ENCODE measurements at regions of chr20 and their contacts with region 1.

Region 1: DNA sequence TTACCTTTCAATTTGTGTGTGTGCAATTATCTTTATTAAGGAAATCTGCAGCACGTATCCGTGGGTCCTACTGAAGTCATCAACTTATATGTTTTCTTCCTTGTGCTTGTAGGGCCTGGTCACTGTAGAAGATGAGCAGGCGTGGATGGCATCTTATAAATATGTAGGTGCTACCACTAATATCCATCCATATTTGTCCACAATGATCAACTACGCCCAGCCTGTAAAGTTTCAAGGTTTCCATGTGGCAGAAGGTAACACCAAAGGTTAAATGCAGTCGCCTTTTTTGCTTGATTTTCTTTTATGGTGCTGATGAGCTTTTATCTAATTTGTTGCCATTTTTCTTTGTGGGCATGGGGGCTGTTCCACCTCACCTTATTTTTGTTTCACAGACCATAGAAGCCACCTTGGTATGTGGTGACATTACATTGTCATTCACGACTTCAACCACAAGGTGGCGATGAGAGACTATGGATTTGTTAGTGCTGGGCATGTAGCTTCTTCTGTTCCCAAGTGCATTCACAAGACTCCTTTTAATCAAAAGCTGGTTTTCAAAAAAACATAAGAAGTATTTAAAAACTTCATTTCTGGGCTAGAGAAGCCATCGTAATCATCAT is 106.5 kb upstream of the LAMP5 start:
- DNase-seq: peak; percentile 57
- H3K4me3 ChIP-seq: no peak overlapping the region; a peak in 1 of 4 replicates
- H3K27ac ChIP-seq: peak overlapping the region; percentile 81 to 88; a peak in 3 of 4 replicates
- H3K4me1 ChIP-seq: peaks cover 2 to 19% of the 10 kb centered on the region in 2 experiments; a peak in 1 of 4 replicates
- H3K27me3 ChIP-seq: no peaks in the 10 kb centered on the region
- CTCF ChIP-seq: peak; percentile 87
- EP300 ChIP-seq: no peak
- RAD21 ChIP-seq: peak; percentile 98

Region 2: DNA sequence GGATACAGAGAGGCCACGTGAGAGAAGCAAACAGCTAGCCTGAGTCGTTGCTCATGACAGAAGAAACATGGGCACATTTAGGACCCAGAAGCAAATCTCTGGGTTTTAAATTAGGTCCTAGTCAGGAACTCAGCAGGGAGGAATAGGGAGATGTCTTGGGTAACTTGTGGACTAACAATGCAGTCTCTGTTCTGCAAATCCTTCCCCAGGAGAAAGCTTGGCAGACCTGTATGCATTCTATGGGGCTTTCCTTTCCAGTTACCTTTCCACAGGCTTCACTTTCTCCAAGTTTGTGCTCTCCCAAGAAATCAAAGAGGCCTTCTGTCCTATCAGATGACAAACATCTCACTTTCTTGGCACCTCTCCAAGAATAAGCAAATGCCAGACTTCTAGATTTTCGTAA is 386.2 kb before region 1 on chr20:
- CTCF ChIA-PET with region 1: no interaction called
- POLR2A ChIA-PET with region 1: no interaction called
- DNase-seq: no peak
- H3K4me3 ChIP-seq: no peak overlapping the region
- H3K27ac ChIP-seq: no peak overlapping the region
- H3K4me1 ChIP-seq: peaks cover 3 to 13% of the 10 kb centered on the region in 2 experiments; a peak in 2 of 4 replicates
- H3K27me3 ChIP-seq: no peaks in the 10 kb centered on the region
- CTCF ChIP-seq: no peak
- EP300 ChIP-seq: no peak
- RAD21 ChIP-seq: no peak

Region 3: GRCh38 chr20:9301129-9302090 is 106.5 kb before region 1 on chr20:
- CTCF ChIA-PET with region 1: no interaction called
- POLR2A ChIA-PET with region 1: no interaction called
- DNase-seq: no peak
- H3K4me3 ChIP-seq: no peak overlapping the region
- H3K27ac ChIP-seq: peak overlapping the region in 1 of 2 experiments; percentile 31; a peak in 2 of 4 replicates
- H3K4me1 ChIP-seq: peaks cover 0 to 20% of the 10 kb centered on the region in 2 experiments; a peak in 2 of 4 replicates
- H3K27me3 ChIP-seq: no peaks in the 10 kb centered on the region
- CTCF ChIP-seq: no peak
- EP300 ChIP-seq: no peak
- RAD21 ChIP-seq: no peak

Region 4: GRCh38 chr20:9440892-9441291 is 33.0 kb after region 1 on chr20:
- CTCF ChIA-PET with region 1: interaction called, 15 read pairs
- POLR2A ChIA-PET with region 1: no interaction called
- DNase-seq: no peak
- H3K4me3 ChIP-seq: no peak overlapping the region
- H3K27ac ChIP-seq: no peak overlapping the region
- H3K4me1 ChIP-seq: peaks cover 0 to 3% of the 10 kb centered on the region in 2 experiments; a peak in 2 of 4 replicates
- H3K27me3 ChIP-seq: no peaks in the 10 kb centered on the region
- CTCF ChIP-seq: no peak
- EP300 ChIP-seq: no peak
- RAD21 ChIP-seq: no peak

Region 5: DNA sequence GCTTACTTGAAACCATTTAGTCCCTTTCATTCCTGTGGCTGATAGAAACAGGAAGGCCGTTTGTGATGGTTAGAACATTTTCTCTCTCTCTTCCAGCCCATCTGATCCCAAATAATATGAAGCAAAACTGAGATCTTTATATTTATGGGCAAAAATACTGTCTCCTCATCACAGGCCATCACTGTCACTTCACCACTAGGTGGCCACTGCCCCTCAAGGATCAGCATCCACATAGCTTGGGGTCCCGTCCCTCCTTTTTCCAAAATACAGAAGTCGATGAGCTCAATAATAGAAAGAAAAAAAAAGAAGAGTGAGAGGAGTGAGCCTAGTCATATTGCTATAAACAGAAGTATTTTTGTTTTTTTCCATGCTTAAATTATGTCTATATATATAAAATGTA is 60.1 kb after region 1 on chr20:
- CTCF ChIA-PET with region 1: interaction called, 16 read pairs
- POLR2A ChIA-PET with region 1: no interaction called
- DNase-seq: peak; percentile 44
- H3K4me3 ChIP-seq: no peak overlapping the region
- H3K27ac ChIP-seq: no peak overlapping the region
- H3K4me1 ChIP-seq: peaks cover 0 to 9% of the 10 kb centered on the region in 2 experiments; a peak in 2 of 4 replicates
- H3K27me3 ChIP-seq: no peaks in the 10 kb centered on the region
- CTCF ChIP-seq: peak; percentile 76
- EP300 ChIP-seq: no peak
- RAD21 ChIP-seq: peak; percentile 82

Region 6: GRCh38 chr20:9514461-9515213 is 106.7 kb after region 1 on chr20 and contains the start of gene LAMP5:
- CTCF ChIA-PET with region 1: interaction called, 16 read pairs
- POLR2A ChIA-PET with region 1: no interaction called
- DNase-seq: peak; percentile 82
- H3K4me3 ChIP-seq: peak within 1 kb of the TSS; percentile 54 to 66
- H3K27ac ChIP-seq: peak within 1 kb of the TSS in 1 of 2 experiments; percentile 58; a peak in 2 of 4 replicates
- H3K4me1 ChIP-seq: peaks cover 0 to 19% of the 10 kb centered on the region in 2 experiments; a peak in 3 of 4 replicates
- H3K27me3 ChIP-seq: peaks cover 11% of the 10 kb centered on the region; the same call in 1 of the 2 replicates
- CTCF ChIP-seq: no peak
- EP300 ChIP-seq: no peak
- RAD21 ChIP-seq: no peak
- polyA plus RNA-seq, gene LAMP5: 4.8 and 10.1 TPM in 2 replicates

Region 7: GRCh38 chr20:9595763-9596162 is 187.8 kb after region 1 on chr20:
- CTCF ChIA-PET with region 1: interaction called, 63 read pairs
- POLR2A ChIA-PET with region 1: no interaction called
- DNase-seq: no peak
- H3K4me3 ChIP-seq: no peak overlapping the region
- H3K27ac ChIP-seq: no peak overlapping the region
- H3K4me1 ChIP-seq: peaks cover 2 to 6% of the 10 kb centered on the region in 2 experiments; a peak in 1 of 4 replicates
- H3K27me3 ChIP-seq: no peaks in the 10 kb centered on the region
- CTCF ChIP-seq: no peak
- EP300 ChIP-seq: no peak
- RAD21 ChIP-seq: no peak

Region 8: GRCh38 chr20:9616833-9617489 is 209.0 kb after region 1 on chr20:
- CTCF ChIA-PET with region 1: interaction called, 255 read pairs
- POLR2A ChIA-PET with region 1: no interaction called
- DNase-seq: peak; percentile 52
- H3K4me3 ChIP-seq: peak overlapping the region in 1 of 2 experiments; percentile 13; a peak in 1 of 4 replicates
- H3K27ac ChIP-seq: no peak overlapping the region
- H3K4me1 ChIP-seq: peaks cover 0 to 8% of the 10 kb centered on the region in 2 experiments; a peak in 2 of 4 replicates
- H3K27me3 ChIP-seq: no peaks in the 10 kb centered on the region
- CTCF ChIP-seq: peak; percentile 93
- EP300 ChIP-seq: no peak
- RAD21 ChIP-seq: peak; percentile 94